ENCODE measurements at regions of chr12 and their contacts with region 1.

Region 1: DNA sequence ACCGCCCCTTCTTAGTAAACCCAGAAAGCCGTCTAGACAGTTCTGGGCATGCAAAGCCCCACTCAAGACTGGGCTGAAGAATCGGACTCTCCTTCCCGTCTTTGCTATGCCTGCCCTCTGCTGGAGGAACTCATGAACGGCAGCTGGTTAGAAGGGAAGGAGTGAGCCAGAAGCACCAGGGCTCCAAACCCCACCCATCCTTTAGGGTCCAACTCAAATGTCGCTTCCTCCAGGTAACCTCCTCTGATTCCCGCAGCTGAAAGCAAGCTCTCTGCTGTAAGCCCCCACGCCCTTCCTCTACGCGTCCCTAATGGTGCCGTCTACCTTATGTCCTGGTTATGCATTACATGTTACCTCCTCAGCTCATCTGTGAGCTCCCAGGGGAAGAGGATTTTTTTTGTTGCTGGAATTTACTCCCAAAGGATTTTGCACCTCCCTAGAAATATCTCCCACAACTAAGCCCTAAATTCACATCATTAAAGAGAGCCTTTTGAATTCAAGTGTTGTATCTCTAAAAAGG is 59.0 kb upstream of the SCN8A start:
- DNase-seq: peak; percentile 70 to 83 (median 79)
- H3K4me3 ChIP-seq: no peak overlapping the region
- H3K27ac ChIP-seq: no peak overlapping the region
- H3K4me1 ChIP-seq: no peaks in the 10 kb centered on the region
- H3K27me3 ChIP-seq: no peaks in the 10 kb centered on the region
- CTCF ChIP-seq: peak; percentile 57 to 80 (median 71)
- EP300 ChIP-seq: no peak
- POLR2A ChIP-seq: no peak

Region 2: DNA sequence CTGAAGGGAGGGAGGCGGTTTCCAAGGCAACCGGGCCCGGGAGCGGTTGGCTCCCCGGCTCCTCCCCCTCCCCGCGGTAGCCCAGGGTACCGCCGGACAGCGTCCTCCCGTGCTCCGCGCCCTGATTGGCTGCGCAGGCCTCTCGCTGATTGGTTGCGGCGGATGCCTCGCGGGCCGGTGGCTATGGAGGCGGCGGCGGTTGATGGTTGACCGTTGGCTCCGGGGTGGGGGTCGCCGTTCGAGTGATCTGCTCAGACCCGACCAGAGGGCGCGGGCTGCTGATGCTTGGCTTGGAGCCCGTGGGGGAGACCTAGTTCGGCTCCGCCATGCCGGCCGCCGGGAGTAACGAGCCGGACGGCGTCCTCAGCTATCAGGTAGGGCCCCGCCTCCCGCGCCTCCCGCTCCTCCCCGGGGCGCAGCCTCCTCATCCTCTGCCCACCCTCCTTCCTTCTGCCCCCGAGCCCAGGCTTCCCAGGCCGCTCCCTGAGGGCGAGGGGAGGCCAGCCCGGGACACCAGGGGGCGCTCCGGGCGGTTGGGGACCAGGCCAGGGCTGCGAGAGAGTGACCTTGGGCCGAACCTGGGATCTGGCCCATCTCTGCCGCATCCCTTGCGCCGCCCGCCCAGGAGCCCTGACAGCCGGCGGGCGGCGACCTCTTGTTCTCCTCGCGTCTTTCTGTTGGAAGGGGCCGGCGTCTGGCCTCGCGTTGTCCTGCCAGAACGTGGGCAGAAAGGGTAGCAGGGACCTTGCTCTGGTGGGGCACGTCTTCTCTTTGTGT is 107.2 kb before region 1 on chr12 and contains the start of gene SLC4A8:
- intact Hi-C with region 1: loop called in 3 of 4 experiments (anchors 2 to 5 kb)
- DNase-seq: peak; percentile 93 to 97 (median 96)
- H3K4me3 ChIP-seq: peak within 1 kb of the TSS; percentile 44
- H3K27ac ChIP-seq: peak within 1 kb of the TSS in 1 of 2 donors; percentile 34
- H3K4me1 ChIP-seq: no peaks in the 10 kb centered on the region
- H3K27me3 ChIP-seq: no peaks in the 10 kb centered on the region
- CTCF ChIP-seq: peak; percentile 31 to 75 (median 45)
- EP300 ChIP-seq: no peak
- POLR2A ChIP-seq: no peak
- total RNA-seq, gene SLC4A8: 4.7 to 18.5 (median 10.6) TPM

Measured in ovary (tissue), 10 donors.